CD4-positive, alpha-beta T cell (primary cell): ENCODE measurements at regions of chr7 and their contacts with region 1.

Region 1: DNA sequence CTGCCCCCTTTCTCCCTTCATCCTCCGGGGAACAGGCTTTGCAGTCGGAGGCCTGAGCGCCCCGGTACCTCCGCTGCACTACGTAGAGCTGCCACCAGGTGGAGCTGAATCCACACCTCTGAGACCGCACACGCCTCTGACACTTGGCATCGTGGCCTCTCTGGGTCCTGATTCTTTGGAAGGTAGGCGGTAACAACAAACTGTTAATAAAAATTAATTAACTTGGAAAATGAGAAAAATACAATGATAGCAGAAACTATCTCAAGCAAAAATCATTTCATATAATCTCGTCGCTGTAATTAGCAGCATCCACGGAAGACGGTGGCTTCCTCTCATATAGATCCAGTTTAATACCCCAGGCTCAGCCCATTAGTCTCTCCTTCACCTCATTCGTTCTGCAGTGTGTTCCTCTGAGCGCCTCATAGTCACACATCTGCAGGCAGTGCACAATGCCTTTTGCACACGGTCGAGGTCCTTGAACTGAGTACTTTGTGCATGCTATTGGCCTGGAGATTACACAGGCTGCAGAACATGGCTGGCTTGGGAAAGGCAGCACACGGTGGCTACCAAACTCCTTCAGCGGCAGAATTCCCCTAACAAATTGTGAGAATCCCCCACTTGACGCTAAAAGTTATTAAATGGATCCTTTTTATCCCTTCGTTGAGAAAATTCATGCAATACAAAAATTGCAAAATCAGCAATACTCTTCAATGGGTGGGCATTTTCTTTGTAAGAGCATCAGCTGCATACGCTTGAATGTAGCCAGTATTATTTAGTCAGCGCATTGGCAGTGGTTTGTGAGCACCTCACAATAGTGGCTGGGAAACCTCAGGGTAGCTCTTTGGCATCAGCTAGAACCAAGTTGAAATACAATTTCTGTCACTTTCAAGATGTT is 18.7 kb downstream of the OR9A2 start:
- DNase-seq: peak; percentile 66 to 91 (median 80)
- ATAC-seq: peak; percentile 96
- H3K4me3 ChIP-seq: no peak overlapping the region
- H3K4me3 Mint-ChIP-seq: no peak overlapping the region
- H3K27ac ChIP-seq: no peak overlapping the region
- H3K27ac Mint-ChIP-seq: no peak overlapping the region
- H3K4me1 ChIP-seq: peaks cover 1% of the 10 kb centered on the region
- H3K4me1 Mint-ChIP-seq: peaks cover 3% of the 10 kb centered on the region
- H3K27me3 ChIP-seq: no peaks in the 10 kb centered on the region
- H3K27me3 Mint-ChIP-seq: peaks cover 4% of the 10 kb centered on the region
- CTCF ChIP-seq: peak; percentile 93

Region 2: GRCh38 chr7:142412551-142413193 is 595.6 kb before region 1 on chr7:
- CTCF ChIA-PET with region 1: no interaction called
- POLR2A ChIA-PET with region 1: no interaction called
- intact Hi-C with region 1: loop called in 1 of 2 experiments (anchors 10 kb)
- DNase-seq: peak in 12 of 14 experiments; percentile 7 to 77 (median 22)
- ATAC-seq: peak; percentile 76
- H3K4me3 ChIP-seq: no peak overlapping the region
- H3K4me3 Mint-ChIP-seq: no peak overlapping the region
- H3K27ac ChIP-seq: no peak overlapping the region
- H3K27ac Mint-ChIP-seq: no peak overlapping the region
- H3K4me1 ChIP-seq: peaks cover 4% of the 10 kb centered on the region
- H3K4me1 Mint-ChIP-seq: no peaks in the 10 kb centered on the region
- H3K27me3 ChIP-seq: no peaks in the 10 kb centered on the region
- H3K27me3 Mint-ChIP-seq: no peaks in the 10 kb centered on the region
- CTCF ChIP-seq: peak; percentile 68

Region 3: DNA sequence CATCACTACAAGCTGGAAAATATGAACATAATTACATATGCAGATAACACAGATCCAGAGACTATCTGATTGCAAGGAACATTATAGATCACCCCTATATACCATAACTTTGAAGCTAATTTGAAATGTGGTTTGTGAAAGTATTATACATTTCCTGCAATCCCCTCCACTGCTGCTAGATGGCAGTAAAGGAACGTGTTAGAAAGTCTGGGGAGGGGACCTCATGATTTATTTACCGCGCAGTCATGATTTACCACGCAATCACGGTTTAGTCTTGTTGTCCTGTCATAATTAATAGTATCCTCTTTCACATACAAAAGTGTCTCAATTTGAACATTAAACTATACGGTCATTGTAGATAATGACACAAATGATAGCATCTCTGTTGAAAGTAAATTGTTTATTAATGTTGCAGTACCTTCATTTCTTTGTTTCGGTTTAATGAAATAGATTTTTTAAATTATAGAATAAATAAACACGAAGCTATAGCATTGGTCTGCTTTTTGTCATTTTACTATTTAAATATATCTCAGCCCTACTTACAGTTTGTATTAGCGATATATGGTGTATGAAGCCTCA is 404.3 kb before region 1 on chr7:
- CTCF ChIA-PET with region 1: interaction called, 5 read pairs
- POLR2A ChIA-PET with region 1: no interaction called
- intact Hi-C with region 1: loop called (anchors 1 to 2 kb)
- DNase-seq: peak in 12 of 14 experiments; percentile 24 to 78 (median 42)
- ATAC-seq: peak; percentile 71
- H3K4me3 ChIP-seq: no peak overlapping the region
- H3K4me3 Mint-ChIP-seq: peak overlapping the region; percentile 58
- H3K27ac ChIP-seq: no peak overlapping the region
- H3K27ac Mint-ChIP-seq: peak overlapping the region; percentile 83
- H3K4me1 ChIP-seq: no peaks in the 10 kb centered on the region
- H3K4me1 Mint-ChIP-seq: peaks cover 7% of the 10 kb centered on the region
- H3K27me3 ChIP-seq: no peaks in the 10 kb centered on the region
- H3K27me3 Mint-ChIP-seq: no peaks in the 10 kb centered on the region
- CTCF ChIP-seq: peak; percentile 76

Region 4: GRCh38 chr7:142853739-142854371 is 154.4 kb before region 1 on chr7:
- CTCF ChIA-PET with region 1: interaction called, 4 read pairs
- POLR2A ChIA-PET with region 1: no interaction called
- intact Hi-C with region 1: loop called in 1 of 2 experiments (anchors 2 kb)
- DNase-seq: peak; percentile 44 to 83 (median 60)
- ATAC-seq: peak; percentile 82
- H3K4me3 ChIP-seq: peak overlapping the region; percentile 87
- H3K4me3 Mint-ChIP-seq: peak overlapping the region; percentile 95
- H3K27ac ChIP-seq: peak overlapping the region; percentile 24 to 41
- H3K27ac Mint-ChIP-seq: peak overlapping the region; percentile 85
- H3K4me1 ChIP-seq: peaks cover 30% of the 10 kb centered on the region
- H3K4me1 Mint-ChIP-seq: peaks cover 52% of the 10 kb centered on the region
- H3K27me3 ChIP-seq: no peaks in the 10 kb centered on the region
- H3K27me3 Mint-ChIP-seq: no peaks in the 10 kb centered on the region
- CTCF ChIP-seq: peak; percentile 90

Region 5: GRCh38 chr7:142956951-142957623 is 51.2 kb before region 1 on chr7:
- CTCF ChIA-PET with region 1: no interaction called
- POLR2A ChIA-PET with region 1: no interaction called
- intact Hi-C with region 1: no loop called
- DNase-seq: no peak
- ATAC-seq: no peak
- H3K4me3 ChIP-seq: no peak overlapping the region
- H3K4me3 Mint-ChIP-seq: no peak overlapping the region
- H3K27ac ChIP-seq: no peak overlapping the region
- H3K27ac Mint-ChIP-seq: no peak overlapping the region
- H3K4me1 ChIP-seq: no peaks in the 10 kb centered on the region
- H3K4me1 Mint-ChIP-seq: no peaks in the 10 kb centered on the region
- H3K27me3 ChIP-seq: no peaks in the 10 kb centered on the region
- H3K27me3 Mint-ChIP-seq: peaks cover 33% of the 10 kb centered on the region
- CTCF ChIP-seq: no peak

Region 6: GRCh38 chr7:142974626-142975025 is 33.6 kb before region 1 on chr7:
- CTCF ChIA-PET with region 1: no interaction called
- POLR2A ChIA-PET with region 1: no interaction called
- intact Hi-C with region 1: no loop called
- DNase-seq: no peak
- ATAC-seq: no peak
- H3K4me3 ChIP-seq: no peak overlapping the region
- H3K4me3 Mint-ChIP-seq: no peak overlapping the region
- H3K27ac ChIP-seq: no peak overlapping the region
- H3K27ac Mint-ChIP-seq: no peak overlapping the region
- H3K4me1 ChIP-seq: no peaks in the 10 kb centered on the region
- H3K4me1 Mint-ChIP-seq: no peaks in the 10 kb centered on the region
- H3K27me3 ChIP-seq: peaks cover 3 to 9% of the 10 kb centered on the region in 2 experiments
- H3K27me3 Mint-ChIP-seq: peaks cover 23% of the 10 kb centered on the region
- CTCF ChIP-seq: no peak

Region 7: GRCh38 chr7:143214789-143215679 is 206.8 kb after region 1 on chr7:
- CTCF ChIA-PET with region 1: interaction called, 45 read pairs
- POLR2A ChIA-PET with region 1: interaction called, 5 read pairs
- intact Hi-C with region 1: loop called (anchors 1 kb)
- DNase-seq: peak; percentile 18 to 89 (median 46)
- ATAC-seq: peak; percentile 98
- H3K4me3 ChIP-seq: no peak overlapping the region
- H3K4me3 Mint-ChIP-seq: no peak overlapping the region
- H3K27ac ChIP-seq: no peak overlapping the region
- H3K27ac Mint-ChIP-seq: no peak overlapping the region
- H3K4me1 ChIP-seq: no peaks in the 10 kb centered on the region
- H3K4me1 Mint-ChIP-seq: no peaks in the 10 kb centered on the region
- H3K27me3 ChIP-seq: no peaks in the 10 kb centered on the region
- H3K27me3 Mint-ChIP-seq: peaks cover 4% of the 10 kb centered on the region
- CTCF ChIP-seq: peak; percentile 100